ENCODE measurements at regions of chr18 and their contacts with region 1.

Region 1: GRCh38 chr18:9919564-9920232 is 5.9 kb downstream of the VAPA start:
- DNase-seq: no peak
- ATAC-seq: no peak
- H3K4me3 Mint-ChIP-seq: no peak overlapping the region
- H3K27ac Mint-ChIP-seq: no peak overlapping the region
- H3K4me1 Mint-ChIP-seq: peaks cover 44% of the 10 kb centered on the region
- H3K27me3 Mint-ChIP-seq: no peaks in the 10 kb centered on the region
- CTCF ChIP-seq: no peak

Region 2: DNA sequence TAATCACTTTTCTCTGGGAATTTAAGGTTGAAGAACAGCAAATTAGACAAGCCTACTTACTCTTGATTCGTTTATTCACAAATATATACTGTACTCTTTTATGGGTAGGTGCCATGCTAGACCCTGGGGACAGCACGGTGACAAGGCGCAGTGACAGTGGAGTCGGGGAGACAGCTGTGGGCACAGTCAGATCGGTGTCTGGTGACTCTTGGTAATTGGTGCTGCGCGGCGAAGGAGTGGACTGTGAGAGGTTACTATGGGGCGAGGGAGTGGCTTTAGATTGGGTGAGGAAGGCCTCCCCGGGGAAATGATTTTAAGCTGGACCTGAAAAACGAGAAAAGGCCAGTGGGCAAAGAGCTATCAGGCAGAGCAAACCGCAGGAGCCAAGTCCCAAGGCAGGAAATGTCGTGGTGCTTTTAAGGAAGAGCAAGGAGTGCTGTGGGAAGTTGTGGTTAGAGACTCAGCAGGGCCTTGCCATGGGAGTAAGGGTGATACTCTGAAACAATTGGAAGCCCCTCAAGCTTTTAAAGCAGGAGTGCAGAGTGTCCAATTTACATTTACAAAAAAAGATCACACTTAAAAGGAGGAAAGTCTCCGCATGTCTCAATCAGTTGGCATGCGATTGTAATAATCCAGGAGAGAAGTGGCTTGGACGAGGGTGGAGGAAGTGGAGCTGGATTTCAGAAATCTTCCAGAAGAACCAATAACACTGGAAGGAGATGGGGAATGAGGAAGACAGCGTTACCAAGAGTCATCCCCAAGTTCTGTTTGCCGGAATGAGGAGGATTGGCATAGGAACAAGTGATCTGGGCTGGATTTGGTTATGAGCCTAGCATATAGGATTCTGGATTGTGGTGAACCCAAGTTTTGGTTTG is 70.1 kb before region 1 on chr18:
- CTCF ChIA-PET with region 1: no interaction called
- POLR2A ChIA-PET with region 1: no interaction called
- intact Hi-C with region 1: no loop called
- DNase-seq: no peak
- ATAC-seq: no peak
- H3K4me3 Mint-ChIP-seq: no peak overlapping the region
- H3K27ac Mint-ChIP-seq: peak overlapping the region; percentile 8
- H3K4me1 Mint-ChIP-seq: peaks cover 3% of the 10 kb centered on the region
- H3K27me3 Mint-ChIP-seq: peaks cover 3% of the 10 kb centered on the region
- CTCF ChIP-seq: no peak

Region 3: DNA sequence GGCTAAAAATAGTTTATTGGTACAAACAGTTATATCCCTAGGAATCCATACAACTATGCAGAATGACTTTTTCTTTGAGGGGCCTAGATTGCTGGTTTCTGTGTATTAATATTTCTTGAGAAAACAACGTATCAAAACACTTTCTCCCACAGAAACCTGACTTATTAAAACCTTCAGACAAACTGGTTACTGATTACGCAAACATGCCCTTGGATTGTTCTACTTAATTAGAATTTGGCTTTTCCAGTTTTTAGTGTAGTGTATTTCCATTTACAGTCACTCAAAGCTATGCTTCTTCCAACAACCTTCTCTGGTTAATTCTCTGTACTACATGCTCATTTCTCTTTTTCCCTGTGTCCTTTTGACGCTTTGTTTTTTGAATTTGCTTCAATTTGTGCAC is 14.2 kb after region 1 on chr18:
- CTCF ChIA-PET with region 1: no interaction called
- POLR2A ChIA-PET with region 1: no interaction called
- intact Hi-C with region 1: loop called (anchors 2 kb)
- DNase-seq: no peak
- ATAC-seq: no peak
- H3K4me3 Mint-ChIP-seq: no peak overlapping the region
- H3K27ac Mint-ChIP-seq: no peak overlapping the region
- H3K4me1 Mint-ChIP-seq: peaks cover 18% of the 10 kb centered on the region
- H3K27me3 Mint-ChIP-seq: no peaks in the 10 kb centered on the region
- CTCF ChIP-seq: no peak

Region 4: DNA sequence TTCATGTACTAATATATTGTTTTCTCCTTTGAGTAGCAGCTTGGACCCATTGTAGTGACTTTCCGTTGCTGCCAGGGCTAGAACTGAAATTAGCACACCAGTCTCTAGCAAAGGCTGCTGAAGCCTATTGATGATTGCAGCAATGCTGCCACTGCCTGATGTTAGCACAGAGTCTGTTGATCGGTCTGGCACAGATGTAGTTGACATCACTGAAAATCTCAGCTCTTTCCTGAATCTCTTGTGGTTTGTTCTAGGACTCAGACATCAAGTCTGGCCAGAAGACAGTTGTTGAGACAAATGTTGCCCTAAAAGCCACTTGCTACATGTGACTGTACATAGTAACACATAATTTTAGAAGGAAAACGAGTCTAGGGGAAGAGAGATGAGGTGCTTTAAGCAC is 41.3 kb after region 1 on chr18:
- CTCF ChIA-PET with region 1: no interaction called
- POLR2A ChIA-PET with region 1: no interaction called
- intact Hi-C with region 1: no loop called
- DNase-seq: no peak
- ATAC-seq: no peak
- H3K4me3 Mint-ChIP-seq: no peak overlapping the region
- H3K27ac Mint-ChIP-seq: no peak overlapping the region
- H3K4me1 Mint-ChIP-seq: peaks cover 22% of the 10 kb centered on the region
- H3K27me3 Mint-ChIP-seq: no peaks in the 10 kb centered on the region
- CTCF ChIP-seq: no peak